Endothelial cell of umbilical vein (primary cell): ENCODE measurements at regions of chr6 and their contacts with region 1.

Region 1: DNA sequence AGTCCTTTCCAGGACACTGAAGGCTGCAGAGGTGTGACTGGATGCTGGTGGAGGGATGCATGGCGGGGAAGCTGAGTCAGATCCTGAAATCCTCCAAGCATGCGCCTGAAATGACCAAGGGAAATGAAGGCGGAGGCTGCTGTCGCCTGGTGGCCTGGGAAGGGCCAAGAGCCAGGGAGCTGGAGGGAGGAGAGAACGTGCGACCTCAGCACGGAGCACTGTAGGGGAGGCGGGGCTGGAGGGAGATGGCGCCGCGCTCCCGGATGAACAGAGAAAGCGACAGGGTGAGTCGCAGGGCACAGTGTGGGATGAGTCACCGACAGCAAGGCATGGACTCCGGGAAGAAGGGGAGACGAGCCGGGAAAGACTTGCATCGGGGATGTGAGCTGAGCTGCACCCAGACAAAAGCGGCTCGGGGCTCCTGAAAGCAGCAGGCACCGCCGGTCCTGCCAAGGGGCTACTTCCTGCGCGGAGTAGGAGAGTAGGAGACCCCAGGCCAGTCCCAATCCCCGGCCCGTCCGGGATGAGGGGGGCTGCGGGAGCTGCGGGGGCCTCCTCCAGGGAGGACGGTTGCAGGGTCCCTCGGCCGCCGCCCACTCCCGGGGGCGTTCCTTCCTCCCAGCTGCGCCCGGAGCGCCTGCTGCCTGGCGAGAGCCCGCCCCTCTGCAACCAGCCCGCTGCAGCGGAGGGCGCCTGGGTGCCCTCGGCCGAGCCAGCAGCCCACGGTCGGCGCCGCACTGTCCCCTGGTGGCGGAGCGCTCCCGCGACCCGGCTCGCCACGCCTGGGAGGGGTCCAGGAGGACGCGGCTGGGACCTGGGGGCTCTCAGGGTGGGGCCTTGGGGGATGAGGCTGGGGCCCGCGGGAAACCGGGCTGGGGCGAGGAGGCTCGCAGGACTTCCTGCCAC is 11.0 kb upstream of the NQO2 start:
- DNase-seq: peak; percentile 98
- H3K4me3 ChIP-seq: peak overlapping the region; percentile 53 to 78 (median 68)
- H3K27ac ChIP-seq: peak overlapping the region; percentile 84
- H3K4me1 ChIP-seq: peaks cover 15% of the 10 kb centered on the region
- H3K27me3 ChIP-seq: no peaks in the 10 kb centered on the region
- CTCF ChIP-seq: peak; percentile 80 to 82
- POLR2A ChIP-seq: peak; percentile 93

Region 2: DNA sequence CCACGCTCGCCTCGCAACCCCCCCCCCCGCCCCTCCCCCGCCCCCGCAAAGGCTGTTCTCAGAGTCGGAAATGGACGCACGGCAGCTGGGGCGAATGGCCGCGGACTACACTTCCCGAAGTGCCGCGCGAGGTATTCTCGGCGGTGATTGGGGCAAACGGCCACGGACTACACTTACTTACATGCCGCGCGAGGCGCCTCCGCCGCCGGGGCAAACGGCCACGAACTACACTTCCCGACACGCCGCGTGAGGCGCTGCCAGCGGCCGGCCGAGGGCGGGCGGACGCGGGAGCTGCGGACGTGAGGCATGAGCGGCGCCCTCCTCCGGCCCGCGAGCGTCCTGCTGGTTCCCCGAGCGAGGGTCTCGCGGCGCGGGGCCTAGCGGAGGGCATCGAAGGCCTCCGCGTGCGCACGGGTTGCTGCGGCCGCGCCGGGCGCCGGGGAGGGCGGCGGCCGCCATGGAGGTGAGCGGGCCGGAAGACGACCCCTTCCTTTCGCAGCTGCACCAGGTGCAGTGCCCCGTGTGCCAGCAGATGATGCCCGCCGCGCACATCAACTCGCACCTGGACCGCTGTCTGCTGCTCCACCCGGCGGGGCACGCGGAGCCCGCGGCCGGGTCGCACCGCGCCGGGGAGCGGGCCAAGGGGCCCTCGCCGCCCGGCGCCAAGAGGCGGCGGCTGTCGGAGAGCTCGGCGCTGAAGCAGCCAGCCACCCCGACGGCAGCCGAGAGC is 223.3 kb before region 1 on chr6 and contains the start of gene WRNIP1:
- CTCF ChIA-PET with region 1: no interaction called
- POLR2A ChIA-PET with region 1: no interaction called
- dilution Hi-C with region 1: no loop called
- intact Hi-C with region 1: loop called (anchors 2 kb)
- DNase-seq: peak; percentile 99
- H3K4me3 ChIP-seq: peak within 1 kb of the TSS; percentile 72 to 98 (median 97)
- H3K27ac ChIP-seq: peak within 1 kb of the TSS; percentile 79
- H3K4me1 ChIP-seq: peaks cover 40% of the 10 kb centered on the region
- H3K27me3 ChIP-seq: no peaks in the 10 kb centered on the region
- CTCF ChIP-seq: peak; percentile 65 to 66
- POLR2A ChIP-seq: no peak
- total RNA-seq, gene WRNIP1: 47.7 and 50.1 TPM in 2 replicates

Region 3: DNA sequence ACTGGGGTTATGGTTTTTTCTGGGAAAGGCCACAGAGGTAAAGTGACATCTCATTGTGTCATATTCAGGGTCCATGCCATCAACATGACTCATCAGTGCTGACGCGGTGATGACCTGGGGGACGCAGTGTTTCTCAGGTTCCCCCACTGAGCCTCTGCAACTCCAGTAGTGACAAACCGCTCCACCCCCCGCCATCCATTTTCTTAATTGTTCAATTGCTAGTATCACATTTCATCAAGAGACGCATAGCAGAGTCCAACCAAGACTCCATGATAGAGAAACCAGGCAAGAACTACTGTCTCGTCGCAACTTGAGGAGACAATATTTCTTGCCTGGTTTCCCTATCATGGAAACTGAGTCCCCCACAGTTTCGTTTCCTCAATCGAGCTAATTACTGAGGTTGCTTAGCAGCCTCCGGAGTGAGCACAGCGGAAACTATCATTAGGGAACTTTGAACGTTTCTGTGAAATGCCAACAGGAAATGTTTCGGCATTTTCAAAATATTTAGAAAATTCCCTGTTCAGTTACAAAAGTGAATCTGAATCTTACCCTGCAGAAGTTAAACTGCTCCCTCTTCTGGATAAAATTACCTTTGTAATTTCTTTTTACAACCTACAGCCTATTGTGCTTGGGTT is 134.8 kb before region 1 on chr6:
- CTCF ChIA-PET with region 1: interaction called, 3 read pairs
- POLR2A ChIA-PET with region 1: no interaction called
- dilution Hi-C with region 1: no loop called
- intact Hi-C with region 1: loop called (anchors 1 kb)
- DNase-seq: peak; percentile 85
- H3K4me3 ChIP-seq: peak overlapping the region in 1 of 3 experiments; percentile 57
- H3K27ac ChIP-seq: peak overlapping the region; percentile 96
- H3K4me1 ChIP-seq: peaks cover 68% of the 10 kb centered on the region
- H3K27me3 ChIP-seq: no peaks in the 10 kb centered on the region
- CTCF ChIP-seq: peak; percentile 11 to 30
- POLR2A ChIP-seq: no peak

Region 4: DNA sequence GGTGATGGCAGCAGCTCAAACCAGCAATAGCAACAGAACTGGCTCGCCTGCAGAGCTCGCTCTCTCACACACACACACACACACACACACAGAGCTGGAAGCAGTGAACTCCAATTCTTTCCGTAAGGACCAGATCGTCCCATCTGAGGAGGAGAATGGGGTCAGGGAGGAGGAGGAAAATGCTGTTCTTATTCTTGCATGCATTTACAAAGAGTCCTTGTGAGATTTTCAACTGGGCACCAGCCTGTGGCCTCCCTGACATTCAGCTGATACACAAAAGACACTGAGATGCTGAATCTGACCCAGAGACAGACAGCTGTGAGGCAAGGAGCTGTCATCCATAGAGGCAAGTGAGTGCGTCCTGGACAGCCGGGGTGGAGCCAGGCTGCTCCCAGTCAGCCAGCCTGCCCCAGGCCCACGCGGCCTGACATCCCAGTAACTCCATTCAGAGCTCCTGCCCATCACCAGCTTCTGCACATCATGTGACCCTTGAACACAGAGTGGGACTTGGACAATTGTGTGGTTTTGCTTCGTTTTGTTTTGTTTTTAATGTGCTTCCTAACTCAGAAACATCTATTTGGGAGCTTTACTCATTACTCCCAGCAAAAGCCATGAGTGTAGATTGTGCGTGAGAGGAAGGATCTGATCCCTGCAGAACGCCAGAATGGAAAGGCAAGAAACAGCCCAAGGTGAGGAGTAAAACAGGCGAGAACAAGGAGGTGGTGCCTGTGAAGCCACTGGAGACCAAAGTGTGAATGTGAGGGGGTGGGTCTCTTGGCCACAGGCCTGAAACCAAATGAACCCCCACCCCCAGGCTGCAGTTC is 87.6 kb before region 1 on chr6:
- CTCF ChIA-PET with region 1: no interaction called
- POLR2A ChIA-PET with region 1: interaction called, 4 read pairs
- dilution Hi-C with region 1: no loop called
- intact Hi-C with region 1: loop called (anchors 1 kb)
- DNase-seq: peak; percentile 41
- H3K4me3 ChIP-seq: peak overlapping the region; percentile 22 to 91 (median 66)
- H3K27ac ChIP-seq: no peak overlapping the region
- H3K4me1 ChIP-seq: peaks cover 15% of the 10 kb centered on the region
- H3K27me3 ChIP-seq: no peaks in the 10 kb centered on the region
- CTCF ChIP-seq: no peak
- POLR2A ChIP-seq: no peak

Region 5: DNA sequence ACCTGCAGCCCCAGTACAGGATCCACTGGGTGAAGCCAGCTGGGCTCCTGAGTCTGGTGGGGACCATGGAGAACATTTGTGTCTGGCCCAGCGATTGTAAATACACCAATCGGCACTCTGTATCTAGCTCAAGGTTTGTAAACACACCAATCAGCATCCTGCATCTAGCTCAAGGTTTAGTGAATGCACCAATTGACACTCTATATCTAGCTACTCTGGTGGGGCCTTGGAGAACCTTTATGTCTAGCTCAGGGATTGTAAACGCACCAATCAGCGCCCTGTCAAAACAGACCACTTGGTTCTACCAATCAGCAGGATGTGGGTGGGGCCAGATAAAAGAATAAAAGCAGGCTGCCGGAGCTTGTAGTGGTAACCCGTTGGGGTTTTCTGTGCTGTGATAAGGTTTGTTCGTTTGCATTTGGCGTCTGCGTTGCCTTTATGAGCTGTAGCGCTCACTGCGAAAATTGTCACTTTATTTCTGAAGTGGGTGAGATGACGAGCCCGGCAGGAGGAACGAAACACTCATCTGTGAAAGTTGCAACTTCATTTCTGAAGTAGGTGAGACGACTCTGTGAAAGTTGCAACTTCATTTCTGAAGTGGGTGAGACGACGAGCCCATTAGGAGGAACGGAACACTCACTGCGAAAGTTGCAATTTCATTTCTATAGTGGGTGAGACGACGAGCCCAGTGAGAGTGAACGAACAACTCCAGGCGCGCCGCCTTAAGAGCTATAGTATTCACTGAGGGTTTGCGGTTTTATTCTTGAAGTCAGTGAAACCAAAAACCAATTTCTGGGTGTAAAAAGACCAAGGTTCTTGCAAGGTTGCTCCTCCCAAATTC is 48.4 kb before region 1 on chr6:
- CTCF ChIA-PET with region 1: interaction called, 19 read pairs
- POLR2A ChIA-PET with region 1: interaction called, 3 read pairs
- dilution Hi-C with region 1: no loop called
- intact Hi-C with region 1: no loop called
- DNase-seq: no peak
- H3K4me3 ChIP-seq: no peak overlapping the region
- H3K27ac ChIP-seq: no peak overlapping the region
- H3K4me1 ChIP-seq: peaks cover 20% of the 10 kb centered on the region
- H3K27me3 ChIP-seq: no peaks in the 10 kb centered on the region
- CTCF ChIP-seq: no peak
- POLR2A ChIP-seq: no peak

Region 6: GRCh38 chr6:2971420-2972218 is 17.1 kb before region 1 on chr6 and contains the start of gene SERPINB6:
- CTCF ChIA-PET with region 1: interaction called, 11 read pairs
- POLR2A ChIA-PET with region 1: interaction called, 5 read pairs
- dilution Hi-C with region 1: no loop called
- intact Hi-C with region 1: loop called (anchors 1 kb)
- DNase-seq: peak; percentile 76
- H3K4me3 ChIP-seq: peak within 1 kb of the TSS; percentile 15 to 58 (median 54)
- H3K27ac ChIP-seq: peak within 1 kb of the TSS; percentile 51
- H3K4me1 ChIP-seq: peaks cover 8% of the 10 kb centered on the region
- H3K27me3 ChIP-seq: no peaks in the 10 kb centered on the region
- CTCF ChIP-seq: no peak
- POLR2A ChIP-seq: no peak
- total RNA-seq, gene SERPINB6: 145 and 155 TPM in 2 replicates